ENCODE measurements at regions of chr10 and their contacts with region 1.

Region 1: GRCh38 chr10:94439275-94439861 is 37.0 kb downstream of the TBC1D12 start:
- DNase-seq: no peak
- H3K4me3 ChIP-seq: no peak overlapping the region
- H3K27ac ChIP-seq: no peak overlapping the region
- H3K4me1 ChIP-seq: no peaks in the 10 kb centered on the region
- H3K27me3 ChIP-seq: no peaks in the 10 kb centered on the region
- CTCF ChIP-seq: no peak
- EP300 ChIP-seq: no peak
- POLR2A ChIP-seq: no peak

Region 2: GRCh38 chr10:94123258-94123995 is 315.9 kb before region 1 on chr10:
- intact Hi-C with region 1: no loop called
- DNase-seq: no peak
- H3K4me3 ChIP-seq: no peak overlapping the region
- H3K27ac ChIP-seq: no peak overlapping the region
- H3K4me1 ChIP-seq: peaks cover 4% of the 10 kb centered on the region
- H3K27me3 ChIP-seq: no peaks in the 10 kb centered on the region
- CTCF ChIP-seq: no peak
- EP300 ChIP-seq: no peak
- POLR2A ChIP-seq: no peak

Region 3: DNA sequence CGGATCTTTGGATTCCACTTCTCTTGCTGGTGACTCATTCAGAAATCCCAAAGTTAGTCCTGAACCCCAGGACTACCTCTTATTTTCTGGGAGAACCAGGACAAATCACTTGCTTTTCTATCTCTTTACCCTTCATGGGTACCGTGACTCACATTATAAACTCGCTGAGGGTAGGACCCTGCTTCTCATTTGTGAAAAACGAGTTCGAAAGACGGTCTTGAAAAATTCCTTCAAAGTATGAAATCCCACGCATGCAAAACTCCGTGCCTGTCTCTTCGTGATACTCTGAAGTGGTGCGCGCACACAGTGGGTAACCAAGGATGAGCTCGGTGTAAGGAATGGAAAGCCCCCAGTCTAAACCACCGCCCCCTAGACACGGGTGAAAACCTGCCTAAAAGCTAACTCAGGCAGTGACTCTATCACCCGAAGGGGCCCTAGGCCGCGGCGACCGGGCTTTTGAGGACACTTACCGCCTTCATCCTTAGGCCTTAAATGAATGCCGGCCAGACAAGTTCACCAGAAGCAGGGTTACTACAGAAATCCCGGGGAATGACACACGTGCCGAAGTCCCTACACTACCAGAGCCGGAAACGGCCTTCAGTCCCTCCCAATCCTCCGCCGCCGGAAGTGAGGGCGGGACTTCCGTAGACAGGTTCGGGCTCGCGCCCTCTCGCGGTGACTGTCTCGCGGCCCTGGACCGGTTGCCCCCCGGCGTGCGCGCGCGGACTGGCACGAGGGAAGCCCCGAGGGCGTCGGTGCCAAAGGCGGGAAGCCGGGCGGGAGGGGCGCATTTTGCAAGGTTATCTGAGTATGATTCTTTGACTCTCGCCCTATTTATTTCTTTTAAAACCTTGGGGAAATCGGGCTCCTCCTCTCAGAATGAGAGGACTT is 76.8 kb before region 1 on chr10 and contains the start of gene NOC3L:
- intact Hi-C with region 1: loop called in 1 of 4 experiments (anchors 10 kb)
- DNase-seq: peak; percentile 92 to 97 (median 95)
- H3K4me3 ChIP-seq: peak within 1 kb of the TSS; percentile 73
- H3K27ac ChIP-seq: no peak within 1 kb of the TSS
- H3K4me1 ChIP-seq: peaks cover 5% of the 10 kb centered on the region
- H3K27me3 ChIP-seq: no peaks in the 10 kb centered on the region
- CTCF ChIP-seq: peak; percentile 75 to 94 (median 86)
- EP300 ChIP-seq: no peak
- POLR2A ChIP-seq: no peak
- total RNA-seq, gene NOC3L: 12.8 to 29.2 (median 17.3) TPM